Activated B cell treated with CpG ODN at 0.5 μM for 24 hours (primary cell): ENCODE measurements at regions of chr19 and their contacts with region 1.

Region 1: DNA sequence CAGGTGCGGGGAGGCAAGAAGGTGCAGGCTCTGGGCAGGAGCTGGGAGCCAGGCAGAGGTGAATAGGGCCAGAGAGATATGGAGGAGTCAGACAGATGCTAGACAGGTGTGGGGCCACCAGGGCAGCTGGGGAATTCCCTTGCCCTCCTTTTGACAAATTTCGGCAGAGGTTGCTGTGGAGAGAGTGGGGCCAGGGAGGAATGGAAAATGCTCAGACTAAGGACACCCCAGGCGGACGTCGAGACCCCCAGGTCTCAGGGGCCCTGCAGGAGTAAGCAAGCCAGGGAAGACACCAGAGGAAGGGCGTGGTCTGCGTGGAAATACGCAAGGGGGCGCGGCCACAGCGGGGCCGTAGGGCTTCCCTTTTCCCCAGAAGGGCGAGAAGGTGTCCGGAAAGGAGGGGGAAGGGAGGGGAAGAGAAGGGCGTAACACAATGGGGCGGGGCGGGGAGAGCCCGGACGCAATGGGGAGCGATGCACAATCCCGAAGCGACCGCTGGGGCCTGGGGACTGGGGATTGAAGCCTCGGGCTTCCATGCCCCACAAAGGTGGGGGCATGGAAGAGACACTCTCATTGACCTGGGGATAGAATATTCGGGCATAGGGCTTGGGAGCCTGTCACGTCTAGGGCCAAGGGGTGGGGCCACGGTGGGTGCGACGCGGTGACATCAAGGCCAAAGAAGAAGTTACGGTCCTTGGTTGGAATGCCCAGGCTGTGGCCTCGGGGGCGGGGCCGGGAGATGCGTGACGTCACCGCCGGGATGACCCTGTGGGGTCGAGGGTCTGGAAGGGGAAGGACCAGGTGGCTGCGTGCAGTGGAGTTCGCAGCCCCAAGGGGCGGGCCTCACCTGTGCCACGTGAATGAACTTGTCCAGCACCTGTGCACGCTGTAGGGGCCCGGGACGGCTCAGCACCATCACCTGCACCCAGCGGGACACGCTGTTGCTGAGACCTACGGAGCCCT is 8.2 kb downstream of the RASGRP4 start:
- DNase-seq: peak; percentile 57
- ATAC-seq: peak; percentile 88
- H3K4me3 Mint-ChIP-seq: peak overlapping the region; percentile 84
- H3K27ac Mint-ChIP-seq: peak overlapping the region; percentile 78
- H3K4me1 Mint-ChIP-seq: peaks cover 26% of the 10 kb centered on the region
- H3K27me3 Mint-ChIP-seq: no peaks in the 10 kb centered on the region
- CTCF ChIP-seq: no peak

Region 2: GRCh38 chr19:38506723-38507550 is 89.1 kb after region 1 on chr19:
- CTCF ChIA-PET with region 1: no interaction called
- POLR2A ChIA-PET with region 1: no interaction called
- intact Hi-C with region 1: loop called (anchors 5 kb)
- DNase-seq: peak; percentile 78
- ATAC-seq: peak; percentile 95
- H3K4me3 Mint-ChIP-seq: peak overlapping the region; percentile 28
- H3K27ac Mint-ChIP-seq: no peak overlapping the region
- H3K4me1 Mint-ChIP-seq: peaks cover 6% of the 10 kb centered on the region
- H3K27me3 Mint-ChIP-seq: peaks cover 19% of the 10 kb centered on the region
- CTCF ChIP-seq: no peak

Region 3: DNA sequence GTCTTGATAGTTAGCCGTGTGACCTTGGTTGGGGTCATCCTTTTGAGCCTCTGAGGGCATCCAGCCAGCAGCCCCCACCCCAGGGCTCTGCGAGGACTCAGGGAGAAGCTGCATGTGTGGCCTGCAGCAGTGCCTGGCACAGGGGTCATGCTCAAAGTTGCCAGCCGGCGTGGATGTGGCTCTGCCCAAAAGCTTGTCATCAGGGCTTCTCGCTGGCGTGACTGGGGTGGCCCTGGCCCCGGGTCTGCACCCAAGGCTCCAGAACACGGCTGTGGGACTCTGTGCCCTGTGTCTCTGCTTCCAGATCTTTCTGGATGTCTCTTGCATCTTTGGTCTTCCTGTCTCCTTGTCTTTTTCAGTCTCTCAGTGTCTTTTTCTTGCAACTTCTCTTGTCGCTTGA is 106.5 kb after region 1 on chr19:
- CTCF ChIA-PET with region 1: no interaction called
- POLR2A ChIA-PET with region 1: interaction called, 18 read pairs
- intact Hi-C with region 1: no loop called
- DNase-seq: no peak
- ATAC-seq: no peak
- H3K4me3 Mint-ChIP-seq: no peak overlapping the region
- H3K27ac Mint-ChIP-seq: no peak overlapping the region
- H3K4me1 Mint-ChIP-seq: no peaks in the 10 kb centered on the region
- H3K27me3 Mint-ChIP-seq: peaks cover 14% of the 10 kb centered on the region
- CTCF ChIP-seq: no peak

Region 4: GRCh38 chr19:38596057-38596981 is 178.5 kb after region 1 on chr19:
- CTCF ChIA-PET with region 1: no interaction called
- POLR2A ChIA-PET with region 1: no interaction called
- intact Hi-C with region 1: no loop called
- DNase-seq: no peak
- ATAC-seq: peak; percentile 42
- H3K4me3 Mint-ChIP-seq: no peak overlapping the region
- H3K27ac Mint-ChIP-seq: no peak overlapping the region
- H3K4me1 Mint-ChIP-seq: no peaks in the 10 kb centered on the region
- H3K27me3 Mint-ChIP-seq: no peaks in the 10 kb centered on the region
- CTCF ChIP-seq: no peak